Natural killer cell (primary cell): ENCODE measurements at regions of chr16 and their contacts with region 1.

Region 1: GRCh38 chr16:7440886-7441400 is 108.3 kb downstream of the RBFOX1 start:
- DNase-seq: no peak
- ATAC-seq: no peak
- H3K4me3 ChIP-seq: no peak overlapping the region
- H3K4me3 Mint-ChIP-seq: no peak overlapping the region
- H3K27ac ChIP-seq: no peak overlapping the region
- H3K27ac Mint-ChIP-seq: no peak overlapping the region
- H3K4me1 ChIP-seq: no peaks in the 10 kb centered on the region
- H3K4me1 Mint-ChIP-seq: no peaks in the 10 kb centered on the region
- H3K27me3 ChIP-seq: no peaks in the 10 kb centered on the region
- H3K27me3 Mint-ChIP-seq: no peaks in the 10 kb centered on the region
- CTCF ChIP-seq: no peak

Region 2: DNA sequence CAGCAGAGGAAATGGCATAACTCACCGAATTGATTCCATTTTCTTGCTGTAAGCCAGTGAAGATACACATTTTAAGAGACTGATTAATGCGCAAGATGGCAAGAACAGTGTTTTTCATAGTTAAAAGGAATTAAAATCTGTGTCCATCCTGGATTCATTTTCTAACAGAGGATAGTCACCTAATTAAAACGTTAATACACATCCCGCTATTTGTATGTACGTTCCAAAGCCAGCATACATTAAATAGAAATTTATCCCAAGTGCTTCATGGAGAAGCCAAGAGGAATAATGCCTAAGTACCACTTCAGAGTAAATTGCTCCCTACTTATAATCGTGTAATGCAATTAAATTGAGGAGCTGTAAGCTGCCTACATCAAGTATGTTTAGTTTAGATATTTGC is 58.4 kb before region 1 on chr16:
- intact Hi-C with region 1: loop called (anchors 10 kb)
- DNase-seq: no peak
- ATAC-seq: no peak
- H3K4me3 ChIP-seq: no peak overlapping the region
- H3K4me3 Mint-ChIP-seq: no peak overlapping the region
- H3K27ac ChIP-seq: no peak overlapping the region
- H3K27ac Mint-ChIP-seq: no peak overlapping the region
- H3K4me1 ChIP-seq: no peaks in the 10 kb centered on the region
- H3K4me1 Mint-ChIP-seq: no peaks in the 10 kb centered on the region
- H3K27me3 ChIP-seq: no peaks in the 10 kb centered on the region
- H3K27me3 Mint-ChIP-seq: no peaks in the 10 kb centered on the region
- CTCF ChIP-seq: no peak